Naive thymus-derived CD4-positive, alpha-beta T cell (primary cell): ENCODE measurements at regions of chr1 and their contacts with region 1.

Region 1: DNA sequence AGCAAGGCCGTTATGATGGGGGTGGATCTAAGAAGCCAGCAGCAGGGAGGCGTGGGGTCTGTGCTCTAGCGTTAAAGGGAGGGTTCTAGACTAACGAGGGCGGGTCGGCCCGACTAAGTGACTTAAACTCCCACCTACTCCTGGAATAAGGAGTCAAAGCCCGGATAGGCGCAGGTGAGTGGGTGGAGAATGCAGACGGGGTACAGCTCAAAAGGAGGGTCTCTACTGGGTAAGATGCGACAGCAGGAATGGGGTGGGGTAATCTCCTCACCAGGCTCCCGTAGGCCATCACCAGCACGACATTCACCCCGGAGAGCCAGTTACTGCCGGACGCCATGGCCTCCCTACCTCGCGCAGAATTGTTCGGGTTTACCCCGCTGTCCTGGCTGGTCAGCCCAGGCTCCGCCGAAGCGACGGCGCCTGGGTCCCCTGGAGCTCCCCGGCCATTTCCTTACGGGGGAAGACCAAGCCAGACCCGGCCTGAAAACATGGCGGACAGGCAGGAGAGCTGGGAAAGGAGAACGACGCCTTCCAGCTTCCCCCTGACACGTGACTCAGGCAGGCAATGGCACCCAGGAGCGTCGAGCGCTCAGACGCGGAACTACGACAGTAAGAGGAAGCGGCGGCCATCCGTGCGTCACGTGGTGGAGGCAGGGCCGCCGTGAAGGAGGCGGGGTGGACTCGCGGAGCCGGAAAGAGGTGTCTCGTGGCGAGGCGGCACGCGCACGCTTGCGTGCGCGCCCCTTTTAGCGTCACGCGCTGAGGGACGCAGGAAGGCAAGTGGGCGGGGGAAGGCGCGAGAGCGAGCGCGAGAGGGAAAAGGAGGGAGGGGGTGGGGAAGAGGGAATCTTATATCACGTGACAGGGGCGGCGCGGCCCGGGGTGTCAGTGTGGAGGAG is at the start of gene UBAP2L:
- DNase-seq: peak; percentile 92 to 99 (median 99)
- ATAC-seq: peak; percentile 91
- H3K4me3 ChIP-seq: peak within 1 kb of the TSS; percentile 95
- H3K4me3 Mint-ChIP-seq: peak within 1 kb of the TSS; percentile 83 to 100 (median 98)
- H3K27ac ChIP-seq: peak within 1 kb of the TSS; percentile 99
- H3K27ac Mint-ChIP-seq: peak within 1 kb of the TSS; percentile 96 to 100 (median 99)
- H3K4me1 ChIP-seq: peaks cover 42 to 45% of the 10 kb centered on the region in 2 donors
- H3K4me1 Mint-ChIP-seq: peaks cover 46 to 76% (median 64%) of the 10 kb centered on the region in 7 donors
- H3K27me3 ChIP-seq: no peaks in the 10 kb centered on the region
- H3K27me3 Mint-ChIP-seq: peaks cover 0 to 4% (median 0%) of the 10 kb centered on the region in 5 donors
- total RNA-seq, gene UBAP2L: 183 to 235 (median 189) TPM

Region 2: GRCh38 chr1:153658400-153659174 is 561.7 kb before region 1 on chr1 and contains the start of gene SNAPIN:
- CTCF ChIA-PET with region 1: no interaction called
- POLR2A ChIA-PET with region 1: no interaction called
- intact Hi-C with region 1: loop called in 1 of 2 experiments (anchors 2 kb)
- DNase-seq: peak; percentile 81 to 94 (median 88)
- ATAC-seq: peak; percentile 98
- H3K4me3 ChIP-seq: peak within 1 kb of the TSS; percentile 93
- H3K4me3 Mint-ChIP-seq: peak within 1 kb of the TSS; percentile 91 to 97 (median 94)
- H3K27ac ChIP-seq: peak within 1 kb of the TSS; percentile 90
- H3K27ac Mint-ChIP-seq: peak within 1 kb of the TSS; percentile 90 to 98 (median 91)
- H3K4me1 ChIP-seq: peaks cover 9 to 13% of the 10 kb centered on the region in 2 donors
- H3K4me1 Mint-ChIP-seq: peaks cover 8 to 26% (median 14%) of the 10 kb centered on the region in 7 donors
- H3K27me3 ChIP-seq: no peaks in the 10 kb centered on the region
- H3K27me3 Mint-ChIP-seq: no peaks in the 10 kb centered on the region
- total RNA-seq, gene SNAPIN: 10.2 to 43.5 (median 29.8) TPM

Region 3: GRCh38 chr1:153783233-153784190 is 436.8 kb before region 1 on chr1:
- CTCF ChIA-PET with region 1: no interaction called
- POLR2A ChIA-PET with region 1: interaction called, 4 read pairs
- intact Hi-C with region 1: loop called in 1 of 2 experiments (anchors 1 kb)
- DNase-seq: peak; percentile 86 to 95 (median 92)
- ATAC-seq: peak; percentile 99
- H3K4me3 ChIP-seq: peak overlapping the region; percentile 78
- H3K4me3 Mint-ChIP-seq: peak overlapping the region; percentile 80 to 97 (median 90)
- H3K27ac ChIP-seq: peak overlapping the region; percentile 96
- H3K27ac Mint-ChIP-seq: peak overlapping the region; percentile 92 to 99 (median 95)
- H3K4me1 ChIP-seq: peaks cover 0 to 10% of the 10 kb centered on the region in 2 donors
- H3K4me1 Mint-ChIP-seq: peaks cover 0 to 17% (median 9%) of the 10 kb centered on the region in 7 donors
- H3K27me3 ChIP-seq: no peaks in the 10 kb centered on the region
- H3K27me3 Mint-ChIP-seq: peaks cover 0 to 6% (median 4%) of the 10 kb centered on the region in 5 donors

Region 4: DNA sequence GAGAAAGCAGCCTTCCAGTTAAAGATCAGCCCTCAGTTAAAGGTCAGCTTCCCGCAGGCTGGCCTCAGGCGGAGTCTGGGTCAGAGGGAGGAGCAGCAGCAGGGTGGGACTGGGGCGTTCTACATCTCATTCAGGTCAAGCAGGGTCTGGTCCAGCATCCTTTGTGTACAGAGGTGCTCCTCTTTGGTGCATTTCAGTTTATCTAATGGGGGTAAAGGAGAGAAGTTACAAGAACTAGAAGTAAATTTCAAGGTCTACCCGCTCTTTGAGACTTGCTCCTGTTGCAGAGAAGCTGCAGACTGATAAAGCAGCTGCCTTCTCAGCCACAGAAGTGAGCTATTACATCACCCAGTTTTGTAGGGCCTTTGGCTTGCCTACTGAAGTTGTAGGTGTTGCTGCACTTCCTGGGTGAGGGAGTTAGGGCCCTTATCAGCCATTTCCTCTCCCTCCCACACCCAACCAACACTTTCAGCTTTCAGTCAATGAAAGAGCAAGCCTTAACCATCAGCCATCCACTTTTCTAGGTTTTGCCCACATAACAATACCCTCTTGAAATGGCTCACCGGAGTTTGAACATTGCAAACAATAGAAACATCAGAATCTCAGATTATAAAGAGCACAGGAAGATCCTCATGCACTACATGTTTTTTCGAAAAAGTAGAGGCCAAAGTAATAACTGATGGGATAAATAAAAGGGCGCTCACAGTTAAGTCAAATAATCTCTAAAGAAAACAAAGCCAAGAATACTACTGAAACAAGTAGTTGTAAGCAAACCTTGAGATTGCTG is 62.6 kb before region 1 on chr1:
- CTCF ChIA-PET with region 1: no interaction called
- POLR2A ChIA-PET with region 1: interaction called, 5 read pairs
- intact Hi-C with region 1: loop called (anchors 1 to 2 kb)
- DNase-seq: peak in 8 of 9 donors; percentile 71 to 90 (median 86)
- ATAC-seq: peak; percentile 98
- H3K4me3 ChIP-seq: peak overlapping the region; percentile 12
- H3K4me3 Mint-ChIP-seq: peak overlapping the region; percentile 71 to 90 (median 79)
- H3K27ac ChIP-seq: peak overlapping the region; percentile 74
- H3K27ac Mint-ChIP-seq: peak overlapping the region; percentile 89 to 97 (median 94)
- H3K4me1 ChIP-seq: peaks cover 34 to 71% of the 10 kb centered on the region in 2 donors
- H3K4me1 Mint-ChIP-seq: peaks cover 36 to 81% (median 69%) of the 10 kb centered on the region in 7 donors
- H3K27me3 ChIP-seq: no peaks in the 10 kb centered on the region
- H3K27me3 Mint-ChIP-seq: no peaks in the 10 kb centered on the region

Region 5: DNA sequence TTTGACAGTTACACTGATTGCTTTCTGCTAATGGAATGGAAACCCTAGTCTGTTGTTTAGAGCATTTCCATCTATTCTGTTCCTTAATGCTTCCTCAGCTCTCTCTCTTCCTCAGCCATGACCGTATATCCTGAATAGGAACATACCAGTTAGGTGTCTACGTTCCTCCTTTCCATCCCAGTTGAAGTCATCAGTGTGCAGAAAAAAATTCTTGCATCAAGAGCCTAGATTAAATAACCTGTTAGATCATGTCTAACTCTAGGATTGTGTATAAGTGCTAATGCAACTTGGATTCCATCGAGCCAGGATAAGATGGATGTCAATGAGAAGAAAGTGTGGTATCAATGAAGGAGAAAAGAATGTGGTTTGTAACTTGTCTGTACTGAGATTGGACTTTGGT is 19.2 kb after region 1 on chr1:
- CTCF ChIA-PET with region 1: interaction called, 3 read pairs
- POLR2A ChIA-PET with region 1: interaction called, 3 read pairs
- intact Hi-C with region 1: loop called in 1 of 2 experiments (anchors 2 kb)
- DNase-seq: no peak
- ATAC-seq: no peak
- H3K4me3 ChIP-seq: no peak overlapping the region
- H3K4me3 Mint-ChIP-seq: peak overlapping the region in 1 of 10 donors; percentile 14
- H3K27ac ChIP-seq: no peak overlapping the region
- H3K27ac Mint-ChIP-seq: peak overlapping the region in 8 of 9 donors; percentile 1 to 81 (median 29)
- H3K4me1 ChIP-seq: peaks cover 0 to 9% of the 10 kb centered on the region in 2 donors
- H3K4me1 Mint-ChIP-seq: peaks cover 11 to 65% (median 41%) of the 10 kb centered on the region in 7 donors
- H3K27me3 ChIP-seq: no peaks in the 10 kb centered on the region
- H3K27me3 Mint-ChIP-seq: no peaks in the 10 kb centered on the region

Region 6: GRCh38 chr1:154324669-154325582 is 104.6 kb after region 1 on chr1 and contains the start of gene ATP8B2:
- CTCF ChIA-PET with region 1: no interaction called
- POLR2A ChIA-PET with region 1: interaction called, 5 read pairs
- intact Hi-C with region 1: loop called (anchors 2 kb)
- DNase-seq: peak; percentile 60 to 82 (median 77)
- ATAC-seq: peak; percentile 80
- H3K4me3 ChIP-seq: peak within 1 kb of the TSS; percentile 79
- H3K4me3 Mint-ChIP-seq: peak within 1 kb of the TSS; percentile 92 to 98 (median 96)
- H3K27ac ChIP-seq: peak within 1 kb of the TSS; percentile 94
- H3K27ac Mint-ChIP-seq: peak within 1 kb of the TSS; percentile 80 to 95 (median 92)
- H3K4me1 ChIP-seq: peaks cover 24 to 36% of the 10 kb centered on the region in 2 donors
- H3K4me1 Mint-ChIP-seq: peaks cover 27 to 42% (median 38%) of the 10 kb centered on the region in 7 donors
- H3K27me3 ChIP-seq: no peaks in the 10 kb centered on the region
- H3K27me3 Mint-ChIP-seq: peaks cover 0 to 31% (median 0%) of the 10 kb centered on the region in 5 donors
- total RNA-seq, gene ATP8B2: 105 to 130 (median 117) TPM

Region 7: GRCh38 chr1:154352581-154353459 is 132.5 kb after region 1 on chr1:
- CTCF ChIA-PET with region 1: no interaction called
- POLR2A ChIA-PET with region 1: no interaction called
- intact Hi-C with region 1: no loop called
- DNase-seq: peak in 8 of 9 donors; percentile 45 to 58 (median 52)
- ATAC-seq: peak; percentile 84
- H3K4me3 ChIP-seq: peak overlapping the region; percentile 79
- H3K4me3 Mint-ChIP-seq: peak overlapping the region; percentile 76 to 98 (median 91)
- H3K27ac ChIP-seq: peak overlapping the region; percentile 74
- H3K27ac Mint-ChIP-seq: peak overlapping the region; percentile 66 to 97 (median 88)
- H3K4me1 ChIP-seq: peaks cover 13 to 32% of the 10 kb centered on the region in 2 donors
- H3K4me1 Mint-ChIP-seq: peaks cover 29 to 64% (median 48%) of the 10 kb centered on the region in 7 donors
- H3K27me3 ChIP-seq: no peaks in the 10 kb centered on the region
- H3K27me3 Mint-ChIP-seq: peaks cover 0 to 2% (median 0%) of the 10 kb centered on the region in 5 donors

Region 8: DNA sequence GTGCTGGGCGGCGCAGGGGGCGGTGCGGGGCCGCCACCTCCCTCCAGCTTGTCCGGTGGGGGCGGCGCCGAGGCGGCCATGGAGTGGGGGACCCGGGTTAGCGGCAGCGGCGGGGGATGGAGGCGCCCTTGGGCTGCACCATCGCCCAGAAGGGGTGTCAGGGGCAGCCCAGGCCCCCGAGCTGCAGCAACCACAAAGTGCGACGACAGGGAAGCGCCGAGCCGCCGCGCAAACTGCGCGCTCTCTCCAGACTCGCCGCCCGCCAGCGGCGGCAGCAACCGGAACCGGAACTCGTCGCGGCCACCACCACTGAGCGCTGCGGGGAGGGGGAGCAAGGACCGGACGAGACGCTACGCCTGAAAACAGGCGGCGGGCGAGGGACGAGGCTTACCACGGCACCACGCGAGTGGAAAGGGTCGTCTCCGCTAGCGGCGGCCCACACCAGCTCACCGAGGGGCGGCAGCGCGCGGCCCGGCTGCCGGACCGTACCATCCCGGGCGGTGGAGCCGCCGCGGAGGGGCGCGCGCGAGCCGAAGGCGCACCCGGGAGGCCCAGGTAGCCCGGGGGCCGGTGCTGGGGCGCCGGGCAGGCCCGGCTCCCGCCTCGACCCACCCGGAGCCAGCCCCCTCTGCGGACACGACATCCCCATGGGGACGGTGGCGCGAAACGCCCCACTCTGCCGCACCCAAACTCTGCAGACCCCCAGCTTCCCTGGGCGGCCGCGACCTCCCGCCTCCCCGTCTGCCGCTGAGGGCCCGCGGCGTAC is 741.4 kb after region 1 on chr1 and contains the start of gene PYGO2:
- CTCF ChIA-PET with region 1: no interaction called
- POLR2A ChIA-PET with region 1: no interaction called
- intact Hi-C with region 1: loop called in 1 of 2 experiments (anchors 5 kb)
- DNase-seq: peak; percentile 72 to 88 (median 78)
- ATAC-seq: peak; percentile 86
- H3K4me3 ChIP-seq: peak within 1 kb of the TSS; percentile 54
- H3K4me3 Mint-ChIP-seq: peak within 1 kb of the TSS; percentile 91 to 98 (median 94)
- H3K27ac ChIP-seq: peak within 1 kb of the TSS; percentile 96
- H3K27ac Mint-ChIP-seq: peak within 1 kb of the TSS; percentile 83 to 100 (median 95)
- H3K4me1 ChIP-seq: peaks cover 18 to 26% of the 10 kb centered on the region in 2 donors
- H3K4me1 Mint-ChIP-seq: peaks cover 16 to 58% (median 46%) of the 10 kb centered on the region in 7 donors
- H3K27me3 ChIP-seq: no peaks in the 10 kb centered on the region
- H3K27me3 Mint-ChIP-seq: no peaks in the 10 kb centered on the region
- total RNA-seq, gene PYGO2: 33.0 to 69.5 (median 46.2) TPM